OCI-LY7 (cell line): ENCODE measurements at regions of chr5 and their contacts with region 1.

Region 1: GRCh38 chr5:178732281-178732680 is 1.8 kb upstream of the ZNF354A start:
- DNase-seq: no peak
- H3K4me3 ChIP-seq: no peak overlapping the region
- H3K27ac ChIP-seq: no peak overlapping the region
- H3K4me1 ChIP-seq: peaks cover 4% of the 10 kb centered on the region
- CTCF ChIP-seq: no peak

Region 2: DNA sequence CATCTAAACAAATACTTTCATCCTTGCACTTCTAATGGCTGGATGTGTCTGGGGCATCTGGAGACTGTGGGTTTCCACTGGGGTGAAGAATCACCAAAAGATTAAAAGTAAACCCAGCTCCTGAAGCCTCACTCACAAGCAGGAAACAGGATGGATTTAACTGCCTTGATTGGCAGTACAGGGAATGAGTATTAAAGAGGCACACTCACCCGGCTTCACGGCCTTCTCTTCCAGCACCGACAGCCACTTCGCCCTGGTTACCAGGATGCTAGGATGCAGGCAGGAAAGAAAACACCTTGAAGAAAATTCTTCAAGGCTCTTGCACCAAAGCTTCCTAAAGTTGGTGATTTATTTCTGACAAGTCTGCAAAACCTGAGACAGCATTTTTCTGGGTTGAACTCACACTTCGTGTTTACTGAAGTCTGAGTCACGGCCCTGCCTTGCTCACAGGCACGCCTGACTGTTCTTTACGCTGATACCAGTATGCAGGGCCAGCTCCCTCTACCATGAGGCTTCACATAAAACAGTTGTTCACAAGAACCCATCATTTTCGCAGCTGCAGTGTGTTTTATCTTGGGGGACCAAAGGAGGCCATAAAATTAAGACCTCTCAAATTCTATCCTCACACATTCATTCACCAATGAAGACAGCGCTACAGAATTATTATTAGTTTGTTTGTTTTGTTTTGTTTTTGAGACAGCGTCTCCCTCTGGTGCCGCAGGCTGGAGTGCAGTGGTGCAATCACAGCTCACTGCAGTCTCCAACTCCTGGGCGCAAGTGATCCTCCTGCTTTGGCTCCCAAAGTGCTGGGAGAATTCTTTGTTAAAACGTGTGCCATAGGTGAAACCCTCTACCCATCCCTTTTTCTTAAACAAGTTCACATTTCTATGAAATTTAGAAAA is 54.8 kb after region 1 on chr5:
- CTCF ChIA-PET with region 1: no interaction called
- POLR2A ChIA-PET with region 1: no interaction called
- intact Hi-C with region 1: no loop called
- DNase-seq: no peak
- H3K4me3 ChIP-seq: no peak overlapping the region
- H3K27ac ChIP-seq: no peak overlapping the region
- H3K4me1 ChIP-seq: no peaks in the 10 kb centered on the region
- CTCF ChIP-seq: no peak

Region 3: GRCh38 chr5:178859625-178860531 is 127.6 kb after region 1 on chr5 and contains the start of gene ZNF354B:
- CTCF ChIA-PET with region 1: interaction called, 5 read pairs
- POLR2A ChIA-PET with region 1: no interaction called
- intact Hi-C with region 1: loop called (anchors 1 kb)
- DNase-seq: peak; percentile 92
- H3K4me3 ChIP-seq: peak within 1 kb of the TSS; percentile 76
- H3K27ac ChIP-seq: no peak within 1 kb of the TSS
- H3K4me1 ChIP-seq: peaks cover 7% of the 10 kb centered on the region
- CTCF ChIP-seq: no peak
- total RNA-seq, gene ZNF354B: 13.4 and 15.2 TPM in 2 replicates

Region 4: DNA sequence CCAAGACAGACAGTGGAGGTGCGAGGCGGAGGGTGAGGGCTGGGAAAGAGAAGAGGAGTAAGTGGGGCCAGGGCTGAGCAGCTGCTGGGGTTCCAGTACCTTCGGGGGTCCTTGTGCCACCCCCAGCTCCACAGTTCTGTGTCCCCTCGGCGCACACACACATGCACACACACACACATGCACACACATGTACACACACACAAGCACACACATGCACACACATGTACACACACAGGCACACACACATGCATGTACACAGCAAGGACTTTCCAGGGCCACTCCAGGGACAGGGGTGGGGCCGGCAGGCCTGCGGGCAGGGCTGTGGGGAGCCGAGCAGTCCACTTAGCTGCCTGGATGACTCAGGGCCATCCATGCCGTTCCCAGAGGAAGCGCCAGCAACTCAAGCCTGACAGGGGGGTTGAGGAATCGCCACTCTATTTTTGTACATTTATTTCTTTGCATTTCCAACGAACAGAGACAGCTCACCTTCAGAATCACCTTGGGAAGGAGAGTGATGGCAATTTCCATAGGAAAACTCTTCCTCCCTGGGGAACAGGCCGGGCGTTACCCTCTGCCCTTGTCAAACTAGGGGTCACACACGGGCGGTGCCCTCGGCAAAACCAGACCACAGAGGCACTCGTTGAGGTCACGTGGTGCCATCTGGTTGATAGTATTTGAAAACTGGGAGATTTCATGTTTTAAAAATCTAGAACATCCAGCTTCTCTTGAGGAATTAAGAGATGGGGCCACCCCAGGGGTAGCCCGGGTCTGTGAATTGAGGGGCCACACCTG is 477.3 kb after region 1 on chr5:
- CTCF ChIA-PET with region 1: no interaction called
- POLR2A ChIA-PET with region 1: no interaction called
- intact Hi-C with region 1: no loop called
- DNase-seq: no peak
- H3K4me3 ChIP-seq: no peak overlapping the region
- H3K27ac ChIP-seq: no peak overlapping the region
- H3K4me1 ChIP-seq: no peaks in the 10 kb centered on the region
- CTCF ChIP-seq: no peak